Transverse colon (tissue), 4 donors: ENCODE measurements at regions of chr14 and their contacts with region 1.

Region 1: DNA sequence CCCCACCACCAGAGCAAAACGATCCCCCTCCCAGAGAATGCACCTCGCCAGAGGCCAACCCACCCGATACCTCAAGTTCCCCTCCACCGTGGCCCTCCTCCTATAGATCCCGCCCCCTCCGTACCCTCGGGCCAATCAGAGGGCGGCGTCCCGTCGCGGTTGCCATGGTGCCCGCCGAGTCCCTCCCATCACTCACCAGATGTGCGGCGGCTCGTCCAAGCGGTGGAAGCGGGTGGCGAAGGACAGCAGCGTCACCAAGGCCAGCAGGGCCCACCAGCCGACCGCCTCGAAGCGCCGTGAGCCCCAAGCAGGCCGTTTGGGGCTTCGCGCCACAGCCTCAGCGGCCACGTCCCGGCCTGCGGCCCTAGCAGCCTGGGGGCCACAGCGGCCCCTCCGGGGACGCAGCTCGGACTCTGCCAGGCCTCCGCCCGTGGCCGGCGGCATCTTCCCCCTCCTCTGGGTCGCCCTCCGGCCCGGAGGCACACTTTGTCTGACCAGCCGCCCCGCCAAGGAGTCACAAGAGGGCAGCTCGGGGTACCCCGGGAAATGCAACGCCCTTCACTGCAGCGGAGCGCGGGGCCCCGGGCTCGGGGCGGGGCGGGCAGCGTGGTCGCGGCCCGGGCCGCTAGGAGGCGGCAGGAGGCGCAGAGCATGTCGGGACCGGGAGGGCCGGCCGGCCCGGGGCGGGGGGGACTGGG is at the start of gene POMT2:
- DNase-seq: peak; percentile 95
- H3K4me3 ChIP-seq: peak within 1 kb of the TSS; percentile 83 to 90 (median 88)
- H3K27ac ChIP-seq: peak within 1 kb of the TSS; percentile 92 to 99 (median 98)
- H3K4me1 ChIP-seq: peaks cover 5 to 30% (median 21%) of the 10 kb centered on the region in 4 donors
- H3K27me3 ChIP-seq: no peaks in the 10 kb centered on the region
- CTCF ChIP-seq: peak; percentile 47 to 76 (median 50)
- EP300 ChIP-seq: no peak
- POLR2A ChIP-seq: peak; percentile 40
- total RNA-seq, gene POMT2: 12.0 to 77.4 (median 24.9) TPM

Region 2: GRCh38 chr14:76876076-76876475 is 444.3 kb before region 1 on chr14:
- in situ Hi-C with region 1: loop called in 1 of 4 experiments (anchors 25 kb)
- intact Hi-C with region 1: no loop called
- DNase-seq: peak; percentile 54
- H3K4me3 ChIP-seq: no peak overlapping the region
- H3K27ac ChIP-seq: no peak overlapping the region
- H3K4me1 ChIP-seq: no peaks in the 10 kb centered on the region
- H3K27me3 ChIP-seq: no peaks in the 10 kb centered on the region
- CTCF ChIP-seq: peak; percentile 85 to 92 (median 89)
- EP300 ChIP-seq: no peak
- POLR2A ChIP-seq: no peak

Region 3: DNA sequence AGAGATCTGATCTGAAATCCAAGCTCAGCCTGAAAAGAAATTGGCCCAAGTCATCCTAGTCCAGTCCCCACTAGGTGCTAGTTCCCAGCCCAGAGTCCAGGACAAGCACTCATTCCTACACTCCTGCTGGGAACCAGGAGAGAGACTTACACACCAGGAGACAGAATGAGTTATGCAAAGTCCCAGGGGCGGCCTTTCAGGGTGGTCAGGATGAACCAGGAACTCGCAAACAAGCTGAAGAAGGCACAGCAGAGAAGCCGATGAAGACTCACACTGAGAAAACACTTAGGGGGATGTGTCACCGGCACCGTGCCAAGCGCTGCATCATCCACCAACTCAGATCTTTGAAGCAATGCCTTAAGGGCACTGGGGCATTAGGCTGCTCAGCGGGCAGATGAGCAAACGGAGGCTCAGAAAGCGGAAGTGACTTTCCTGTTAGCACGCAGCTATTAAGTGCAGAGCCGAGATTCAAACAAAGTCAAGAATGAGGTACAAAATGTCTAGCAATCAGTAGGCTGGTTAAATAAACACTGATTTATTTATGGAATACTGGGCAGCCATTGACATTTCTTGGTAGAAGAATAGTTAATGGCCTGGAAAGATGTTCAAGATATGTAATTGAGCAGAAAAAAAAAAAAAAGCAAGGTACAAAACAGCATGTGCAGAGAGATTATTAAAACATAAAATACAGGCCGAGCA is 415.5 kb before region 1 on chr14:
- in situ Hi-C with region 1: loop called in 1 of 4 experiments (anchors 25 kb)
- intact Hi-C with region 1: no loop called
- DNase-seq: peak; percentile 61
- H3K4me3 ChIP-seq: no peak overlapping the region
- H3K27ac ChIP-seq: peak overlapping the region; percentile 71 to 89 (median 84)
- H3K4me1 ChIP-seq: peaks cover 19 to 44% (median 22%) of the 10 kb centered on the region in 4 donors
- H3K27me3 ChIP-seq: no peaks in the 10 kb centered on the region
- CTCF ChIP-seq: no peak
- EP300 ChIP-seq: no peak
- POLR2A ChIP-seq: no peak

Region 4: DNA sequence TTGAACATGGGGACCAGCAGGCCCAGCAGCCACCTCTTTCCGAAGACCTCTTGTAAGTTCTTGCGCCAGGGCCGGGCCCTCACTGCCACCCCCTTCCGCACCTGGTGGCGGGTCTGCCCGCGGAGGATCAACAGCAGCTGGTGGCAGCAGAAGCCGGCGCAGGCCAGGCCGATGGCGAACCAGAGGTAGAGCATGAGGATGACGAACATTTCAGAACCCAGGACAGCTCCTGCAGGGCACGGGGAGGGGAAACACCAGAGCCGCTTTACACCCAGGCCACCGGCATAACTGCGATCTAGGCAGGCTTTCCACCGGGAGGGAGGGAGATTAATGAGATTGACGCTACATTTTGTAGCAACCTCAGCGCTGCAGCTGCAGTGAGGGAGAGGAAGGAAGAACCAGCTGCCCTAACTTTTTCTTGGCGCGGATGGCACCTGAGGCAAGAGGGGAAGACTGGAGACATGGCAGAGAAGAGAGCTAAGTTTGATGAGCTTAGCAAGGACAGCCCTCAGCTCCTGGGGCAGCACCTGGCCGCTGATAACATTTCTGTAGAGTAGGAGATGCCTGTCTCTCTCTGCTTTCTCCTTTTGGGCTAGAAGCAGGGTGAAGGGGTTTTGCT is 186.6 kb before region 1 on chr14:
- in situ Hi-C with region 1: loop called in 1 of 4 experiments (anchors 25 kb)
- intact Hi-C with region 1: no loop called
- DNase-seq: peak; percentile 50
- H3K4me3 ChIP-seq: no peak overlapping the region
- H3K27ac ChIP-seq: no peak overlapping the region
- H3K4me1 ChIP-seq: no peaks in the 10 kb centered on the region
- H3K27me3 ChIP-seq: peaks cover 57% of the 10 kb centered on the region
- CTCF ChIP-seq: no peak
- EP300 ChIP-seq: no peak
- POLR2A ChIP-seq: no peak

Region 5: GRCh38 chr14:77457522-77458290 is 137.3 kb after region 1 on chr14 and contains the starts of genes AHSA1 and VIPAS39:
- in situ Hi-C with region 1: loop called in 1 of 4 experiments (anchors 10 kb)
- intact Hi-C with region 1: no loop called
- DNase-seq: peak; percentile 96
- H3K4me3 ChIP-seq: peak within 1 kb of the TSS; percentile 62 to 88 (median 72)
- H3K27ac ChIP-seq: peak within 1 kb of the TSS; percentile 88 to 94 (median 91)
- H3K4me1 ChIP-seq: peaks cover 14 to 30% (median 21%) of the 10 kb centered on the region in 4 donors
- H3K27me3 ChIP-seq: no peaks in the 10 kb centered on the region
- CTCF ChIP-seq: no peak
- EP300 ChIP-seq: no peak
- POLR2A ChIP-seq: peak; percentile 57
- total RNA-seq, gene AHSA1: 66.6 to 101 (median 87.5) TPM
- total RNA-seq, gene VIPAS39: 8.0 to 21.6 (median 18.0) TPM